Endothelial cell of umbilical vein (primary cell): ENCODE measurements at regions of chr1 and their contacts with region 1.

Region 1: DNA sequence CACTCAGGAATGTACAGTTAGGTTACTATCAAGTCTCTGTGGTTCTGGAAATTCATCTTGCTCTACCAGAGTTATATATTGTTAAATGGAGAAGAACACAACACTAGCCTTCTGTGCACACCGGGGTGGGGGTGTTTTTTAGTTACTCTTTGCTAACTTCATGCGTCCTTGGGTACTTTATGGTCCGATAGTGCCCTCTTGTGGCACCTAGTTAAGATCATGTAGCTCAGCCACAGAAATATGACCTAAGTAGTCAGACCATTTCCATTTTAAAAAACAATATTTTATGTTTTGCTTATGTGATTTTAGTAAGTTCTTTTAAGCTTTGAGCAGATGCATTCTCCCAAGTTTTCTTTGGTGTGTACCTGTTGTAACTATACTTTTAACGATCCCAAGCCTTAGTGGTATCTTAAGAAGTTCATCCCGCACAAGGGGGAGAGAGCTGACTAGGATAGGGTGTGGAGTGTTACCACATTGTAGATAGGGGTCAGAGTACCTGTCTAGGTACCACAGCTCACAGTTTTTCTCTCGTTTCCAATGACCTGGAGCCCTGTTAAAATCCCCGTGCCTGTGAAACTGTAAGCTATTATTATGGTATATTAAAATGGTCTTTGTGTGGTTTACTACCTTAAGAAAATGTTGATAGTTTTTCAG is 20.6 kb upstream of the SH3D21 start:
- DNase-seq: peak; percentile 79
- H3K4me3 ChIP-seq: no peak overlapping the region
- H3K27ac ChIP-seq: no peak overlapping the region
- H3K4me1 ChIP-seq: no peaks in the 10 kb centered on the region
- H3K27me3 ChIP-seq: no peaks in the 10 kb centered on the region
- CTCF ChIP-seq: peak; percentile 57 to 59
- POLR2A ChIP-seq: no peak

Region 2: GRCh38 chr1:36099681-36100341 is 185.8 kb before region 1 on chr1:
- CTCF ChIA-PET with region 1: interaction called, 21 read pairs
- POLR2A ChIA-PET with region 1: no interaction called
- dilution Hi-C with region 1: no loop called
- intact Hi-C with region 1: loop called (anchors 1 kb)
- DNase-seq: peak; percentile 65
- H3K4me3 ChIP-seq: no peak overlapping the region
- H3K27ac ChIP-seq: no peak overlapping the region
- H3K4me1 ChIP-seq: no peaks in the 10 kb centered on the region
- H3K27me3 ChIP-seq: no peaks in the 10 kb centered on the region
- CTCF ChIP-seq: peak; percentile 84
- POLR2A ChIP-seq: no peak

Region 3: GRCh38 chr1:36160949-36161485 is 124.6 kb before region 1 on chr1:
- CTCF ChIA-PET with region 1: interaction called, 17 read pairs
- POLR2A ChIA-PET with region 1: no interaction called
- dilution Hi-C with region 1: no loop called
- intact Hi-C with region 1: no loop called
- DNase-seq: peak; percentile 83
- H3K4me3 ChIP-seq: peak overlapping the region; percentile 26 to 66 (median 36)
- H3K27ac ChIP-seq: peak overlapping the region; percentile 97
- H3K4me1 ChIP-seq: peaks cover 51% of the 10 kb centered on the region
- H3K27me3 ChIP-seq: no peaks in the 10 kb centered on the region
- CTCF ChIP-seq: peak; percentile 29 to 36
- POLR2A ChIP-seq: peak; percentile 86

Region 4: GRCh38 chr1:36223993-36224536 is 61.5 kb before region 1 on chr1 and contains the start of gene THRAP3:
- CTCF ChIA-PET with region 1: interaction called, 14 read pairs
- POLR2A ChIA-PET with region 1: no interaction called
- dilution Hi-C with region 1: no loop called
- intact Hi-C with region 1: loop called (anchors 2 kb)
- DNase-seq: peak; percentile 100
- H3K4me3 ChIP-seq: peak within 1 kb of the TSS; percentile 74 to 99 (median 78)
- H3K27ac ChIP-seq: peak within 1 kb of the TSS; percentile 89
- H3K4me1 ChIP-seq: peaks cover 17% of the 10 kb centered on the region
- H3K27me3 ChIP-seq: no peaks in the 10 kb centered on the region
- CTCF ChIP-seq: no peak
- POLR2A ChIP-seq: peak; percentile 93
- total RNA-seq, gene THRAP3: 130 and 144 TPM in 2 replicates

Region 5: DNA sequence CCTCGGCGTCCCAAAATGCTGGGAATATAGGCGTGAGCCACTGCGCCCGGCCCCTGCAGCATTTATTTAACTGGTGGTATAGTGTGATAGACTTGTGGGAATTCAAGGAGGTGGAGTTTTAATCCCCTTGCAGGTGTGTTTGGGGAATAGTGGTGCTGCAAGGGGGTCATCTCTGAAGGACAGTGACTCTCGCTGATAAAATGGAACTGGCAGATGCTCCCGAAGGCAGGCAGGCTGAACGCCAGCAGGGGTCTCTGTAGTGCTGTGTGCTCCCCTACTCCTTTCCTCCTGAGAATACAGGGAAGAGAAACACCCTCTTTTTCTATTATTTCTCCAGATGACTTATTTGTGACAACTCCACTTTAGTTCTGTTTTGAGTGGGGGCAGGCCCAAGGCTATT is 160.7 kb after region 1 on chr1:
- CTCF ChIA-PET with region 1: no interaction called
- POLR2A ChIA-PET with region 1: no interaction called
- dilution Hi-C with region 1: no loop called
- intact Hi-C with region 1: no loop called
- DNase-seq: no peak
- H3K4me3 ChIP-seq: no peak overlapping the region
- H3K27ac ChIP-seq: no peak overlapping the region
- H3K4me1 ChIP-seq: peaks cover 4% of the 10 kb centered on the region
- H3K27me3 ChIP-seq: no peaks in the 10 kb centered on the region
- CTCF ChIP-seq: peak; percentile 17 to 41
- POLR2A ChIP-seq: no peak